AG04449 (cell line): ENCODE measurements at regions of chr5 and their contacts with region 1.

Region 1: DNA sequence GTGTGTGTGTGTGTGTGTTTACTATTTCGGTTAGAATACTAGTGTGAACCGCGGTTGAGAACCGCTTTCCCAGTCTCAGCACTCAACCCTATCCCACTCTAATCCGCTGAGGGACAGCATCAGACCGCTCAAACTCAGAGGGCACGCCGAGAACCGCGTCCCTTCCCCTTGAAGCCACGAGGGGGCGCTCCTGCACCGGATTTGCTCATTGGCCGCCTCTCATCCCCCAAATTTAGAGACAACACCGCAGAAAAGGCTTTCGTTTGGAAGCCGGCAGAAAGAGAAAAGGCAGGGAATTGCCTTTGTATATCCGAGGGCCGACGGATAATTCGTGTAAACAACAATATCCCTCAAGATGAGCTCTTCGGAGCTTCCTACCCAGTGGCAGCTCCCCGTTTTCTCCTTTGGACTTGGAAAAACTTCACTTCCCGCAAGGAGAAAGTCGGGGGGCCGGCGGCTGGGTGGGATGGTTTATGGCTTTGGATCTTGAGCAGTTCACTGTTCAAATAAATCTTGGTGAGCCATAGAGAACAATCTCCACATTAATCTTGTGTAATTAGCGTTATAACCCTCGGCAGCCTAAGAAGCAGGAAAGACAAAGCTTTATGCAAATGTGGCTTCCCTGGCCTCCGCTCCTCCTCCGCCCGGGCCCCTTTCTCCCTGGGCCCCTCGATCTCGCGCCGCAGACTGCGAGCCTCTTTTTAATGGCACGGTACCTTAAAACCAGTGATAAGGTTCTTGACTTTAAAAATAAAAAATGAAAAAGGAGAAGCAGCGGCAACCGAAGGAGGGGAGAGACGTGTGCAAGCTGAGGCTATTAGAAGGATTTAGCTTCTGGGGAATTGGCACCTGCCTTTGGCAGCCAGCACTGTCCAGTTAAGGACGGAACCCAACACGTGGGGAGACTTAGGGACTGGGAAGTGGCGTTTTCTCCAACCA is 296.8 kb downstream of the PARP8 start:
- DNase-seq: no peak
- H3K4me3 ChIP-seq: peak overlapping the region; percentile 51
- CTCF ChIP-seq: peak; percentile 96

Region 2: GRCh38 chr5:52007230-52007858 is 1044.1 kb after region 1 on chr5:
- CTCF ChIA-PET with region 1: interaction called, 11 read pairs
- POLR2A ChIA-PET with region 1: no interaction called
- DNase-seq: no peak
- H3K4me3 ChIP-seq: no peak overlapping the region
- CTCF ChIP-seq: peak; percentile 44

Region 3: DNA sequence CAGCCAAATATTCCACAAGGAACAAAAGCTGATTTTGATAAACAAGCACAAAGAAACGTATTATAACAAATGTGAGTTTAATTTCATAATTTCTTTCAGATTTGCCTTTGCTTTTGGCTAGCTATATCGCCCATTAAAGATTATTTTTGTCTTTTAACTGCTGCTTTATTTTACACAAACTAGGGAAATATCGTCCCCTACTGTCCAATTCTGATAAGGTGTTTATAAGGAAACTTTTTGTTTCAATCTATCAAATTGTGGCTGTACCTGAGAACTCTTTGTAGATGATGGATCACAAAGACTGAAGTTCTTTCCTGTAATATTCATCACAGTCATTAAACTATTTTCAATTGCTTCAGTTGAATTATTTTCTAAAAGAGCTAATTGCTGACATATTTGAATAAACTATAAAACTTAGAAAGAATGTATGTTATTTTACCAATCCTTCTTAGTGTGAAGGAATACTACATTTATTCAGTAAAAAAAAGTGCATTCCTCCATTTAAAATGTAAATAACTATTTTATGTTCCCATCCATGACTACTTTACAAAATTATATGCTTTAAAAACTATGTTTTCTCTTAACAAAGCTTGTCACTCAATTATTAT is 1393.2 kb after region 1 on chr5:
- CTCF ChIA-PET with region 1: interaction called, 13 read pairs
- POLR2A ChIA-PET with region 1: no interaction called
- DNase-seq: no peak
- H3K4me3 ChIP-seq: no peak overlapping the region
- CTCF ChIP-seq: peak; percentile 23

Region 4: GRCh38 chr5:52657247-52657645 is 1694.0 kb after region 1 on chr5:
- CTCF ChIA-PET with region 1: interaction called, 54 read pairs
- POLR2A ChIA-PET with region 1: no interaction called
- DNase-seq: no peak
- H3K4me3 ChIP-seq: no peak overlapping the region
- CTCF ChIP-seq: peak; percentile 33

Region 5: GRCh38 chr5:52825826-52826225 is 1862.6 kb after region 1 on chr5:
- CTCF ChIA-PET with region 1: no interaction called
- POLR2A ChIA-PET with region 1: no interaction called
- DNase-seq: no peak
- H3K4me3 ChIP-seq: no peak overlapping the region
- CTCF ChIP-seq: no peak